H1 (cell line): ENCODE measurements at regions of chr2 and their contacts with region 1.

Region 1: DNA sequence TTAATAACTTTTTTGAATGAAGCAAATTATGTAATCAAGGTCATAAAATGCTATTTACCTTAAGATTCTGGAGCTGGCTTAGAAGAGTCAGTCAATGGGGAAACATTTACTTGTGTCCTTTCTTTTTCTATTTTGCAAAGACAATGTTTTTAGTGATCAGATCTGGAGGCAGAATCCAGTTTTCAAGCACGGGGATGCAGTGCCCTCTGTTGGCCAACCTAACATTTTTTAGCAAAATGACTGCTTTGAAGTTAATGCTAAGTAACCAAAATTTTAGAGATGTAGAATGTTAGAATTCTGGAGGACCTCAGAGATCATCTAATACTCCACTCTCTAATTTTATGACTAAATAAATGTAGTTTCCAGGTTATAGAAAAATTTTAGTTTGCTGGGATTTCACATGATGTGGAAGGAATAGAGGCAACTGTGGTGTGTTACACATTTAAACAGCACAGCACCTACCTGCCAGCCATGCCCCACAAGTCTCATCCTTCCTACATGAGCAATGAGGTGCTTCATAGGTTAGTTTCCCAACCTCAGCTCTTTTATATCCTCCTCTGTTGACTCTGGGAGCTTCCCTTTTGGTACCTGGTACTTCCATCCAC is 23.6 kb upstream of the SLC9A4 start:
- DNase-seq: peak in 1 of 2 experiments; percentile 62
- H3K4me3 ChIP-seq: no peak overlapping the region
- H3K27ac ChIP-seq: no peak overlapping the region
- H3K4me1 ChIP-seq: no peaks in the 10 kb centered on the region
- H3K27me3 ChIP-seq: no peaks in the 10 kb centered on the region
- CTCF ChIP-seq: peak in 2 of 3 experiments; percentile 54 to 59; a peak in 3 of 4 replicates
- EP300 ChIP-seq: no peak
- POLR2A ChIP-seq: no peak
- RAD21 ChIP-seq: peak; percentile 83

Region 2: GRCh38 chr2:102235491-102235890 is 214.0 kb before region 1 on chr2:
- CTCF ChIA-PET with region 1: interaction called, 24 read pairs
- POLR2A ChIA-PET with region 1: no interaction called
- DNase-seq: peak in 1 of 2 experiments; percentile 51
- H3K4me3 ChIP-seq: no peak overlapping the region
- H3K27ac ChIP-seq: no peak overlapping the region
- H3K4me1 ChIP-seq: no peaks in the 10 kb centered on the region
- H3K27me3 ChIP-seq: no peaks in the 10 kb centered on the region
- CTCF ChIP-seq: peak; percentile 63 to 74 (median 72)
- EP300 ChIP-seq: no peak
- POLR2A ChIP-seq: no peak
- RAD21 ChIP-seq: peak; percentile 76 to 86

Region 3: DNA sequence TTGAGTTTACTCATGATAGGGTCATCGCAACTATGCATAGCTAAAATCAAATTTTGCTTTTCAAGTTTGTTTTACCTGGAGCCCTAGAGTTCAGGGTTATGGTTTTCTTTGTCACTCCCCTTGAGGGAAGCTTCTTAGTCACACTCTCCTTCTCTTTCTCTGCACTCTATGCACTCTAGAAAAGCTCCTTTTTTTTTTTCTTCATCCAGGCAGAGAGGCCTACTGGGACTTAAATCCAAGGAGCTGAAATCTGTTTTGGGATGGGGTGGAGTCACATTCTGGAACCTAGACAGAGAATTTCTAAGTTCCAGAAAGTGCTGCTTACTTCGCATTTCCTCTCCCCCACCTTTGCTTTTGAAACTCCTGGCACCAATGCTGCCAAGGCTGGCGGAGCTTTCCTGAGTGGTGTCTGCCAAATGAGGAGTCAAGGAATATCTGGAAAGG is 112.9 kb before region 1 on chr2:
- CTCF ChIA-PET with region 1: no interaction called
- POLR2A ChIA-PET with region 1: no interaction called
- DNase-seq: no peak
- H3K4me3 ChIP-seq: no peak overlapping the region
- H3K27ac ChIP-seq: no peak overlapping the region
- H3K4me1 ChIP-seq: no peaks in the 10 kb centered on the region
- H3K27me3 ChIP-seq: peaks cover 0 to 1% (median 0%) of the 10 kb centered on the region in 4 experiments; a peak in 1 of 7 replicates
- CTCF ChIP-seq: no peak
- EP300 ChIP-seq: no peak
- POLR2A ChIP-seq: no peak
- RAD21 ChIP-seq: no peak